Motor neuron (in vitro differentiated cells): ENCODE measurements at regions of chr18 and their contacts with region 1.

Region 1: DNA sequence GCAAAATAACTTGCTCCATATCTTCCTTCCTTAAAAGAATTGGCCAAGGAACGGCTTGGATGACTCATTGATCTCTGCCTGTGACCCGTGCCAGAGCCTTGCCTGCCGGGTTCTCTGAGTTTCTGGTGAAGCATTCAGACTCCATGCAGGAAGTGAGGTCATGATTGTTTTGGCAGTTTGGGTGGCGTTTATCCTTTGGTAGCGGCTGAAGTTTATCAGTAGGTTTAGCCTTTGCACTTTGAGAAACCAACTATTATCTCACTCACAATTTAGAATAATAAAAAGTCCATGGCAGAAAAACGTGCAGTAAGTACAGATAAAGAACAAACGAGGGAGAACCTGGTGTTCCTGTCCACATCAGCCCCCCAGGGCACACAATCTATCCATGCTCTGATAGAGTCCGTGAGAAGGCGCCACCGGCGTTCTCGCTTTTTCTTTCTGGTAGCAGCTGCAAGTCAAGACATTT is 15.0 kb upstream of the CTAGE1 start:
- ATAC-seq: peak in 2 of 8 experiments; percentile 72 to 75
- H3K4me3 ChIP-seq: no peak overlapping the region
- H3K27ac ChIP-seq: no peak overlapping the region
- H3K4me1 ChIP-seq: no peaks in the 10 kb centered on the region

Region 2: DNA sequence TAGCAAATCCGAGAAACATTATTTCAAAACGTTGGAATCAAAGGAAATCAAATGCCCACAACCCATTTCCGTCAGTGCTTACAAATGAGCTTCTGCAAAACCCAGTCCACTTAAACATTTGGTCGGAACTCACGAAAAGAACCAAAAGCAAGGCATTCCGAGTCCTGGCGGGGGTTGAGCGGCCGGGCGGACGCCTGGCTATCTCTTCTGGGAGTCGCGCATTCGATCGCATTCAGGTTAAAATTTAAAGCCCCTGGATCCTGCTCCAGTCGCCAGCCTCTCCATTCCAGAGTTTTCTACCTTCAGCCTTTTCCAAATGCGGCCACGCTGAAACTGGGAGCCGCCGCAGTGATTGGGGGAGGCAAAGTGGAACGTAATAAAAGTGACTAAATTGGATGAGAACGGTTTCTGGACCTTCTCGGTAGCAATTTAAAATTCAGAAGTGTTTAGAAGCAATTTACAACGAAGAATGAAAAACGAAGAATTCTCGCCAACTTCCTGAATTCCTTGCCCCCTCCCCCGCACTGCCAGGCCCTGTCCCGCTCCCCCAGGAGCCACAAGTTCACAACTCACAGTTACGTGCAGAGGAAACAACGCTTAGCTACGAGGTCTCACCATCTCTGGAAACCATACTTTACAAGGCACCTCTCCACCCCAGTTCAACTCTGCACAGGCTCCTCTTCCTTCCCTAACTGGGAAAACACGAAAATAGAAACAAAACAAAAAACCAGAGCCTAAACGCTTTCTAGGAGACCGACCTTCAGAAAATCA is 265.0 kb before region 1 on chr18:
- in situ Hi-C with region 1: no loop called
- ATAC-seq: no peak
- H3K4me3 ChIP-seq: no peak overlapping the region
- H3K27ac ChIP-seq: no peak overlapping the region
- H3K4me1 ChIP-seq: peaks cover 3 to 9% of the 10 kb centered on the region in 2 donors

Region 3: DNA sequence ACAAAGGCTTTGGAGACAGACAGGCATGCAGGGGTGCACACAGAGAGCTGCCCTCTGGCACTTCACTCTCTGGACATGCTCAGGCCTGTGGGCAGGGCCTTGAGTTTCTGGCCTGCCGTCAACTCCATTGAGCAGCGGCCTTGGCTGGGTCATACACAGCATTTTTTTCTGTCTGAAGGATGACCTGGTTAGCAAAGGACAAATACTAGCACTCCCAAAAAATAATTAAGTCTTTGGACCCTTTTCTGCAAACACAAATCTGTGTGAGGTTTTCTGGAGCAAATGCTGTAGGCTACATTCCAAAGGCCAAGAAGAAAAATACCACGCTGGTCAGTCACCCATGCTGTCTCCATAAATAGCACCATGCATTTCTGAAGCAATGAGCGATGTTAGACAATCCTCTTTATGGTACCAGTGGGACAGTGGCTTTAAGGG is 109.7 kb after region 1 on chr18:
- in situ Hi-C with region 1: loop called in 1 of 9 experiments (anchors 25 kb)
- ATAC-seq: peak in 1 of 8 experiments; percentile 6
- H3K4me3 ChIP-seq: no peak overlapping the region
- H3K27ac ChIP-seq: no peak overlapping the region
- H3K4me1 ChIP-seq: no peaks in the 10 kb centered on the region

Region 4: GRCh38 chr18:22601481-22601880 is 168.8 kb after region 1 on chr18:
- in situ Hi-C with region 1: no loop called
- ATAC-seq: no peak
- H3K4me3 ChIP-seq: no peak overlapping the region
- H3K27ac ChIP-seq: no peak overlapping the region
- H3K4me1 ChIP-seq: no peaks in the 10 kb centered on the region